Heart right ventricle (tissue), 16 donors: ENCODE measurements at regions of chr2 and their contacts with region 1.

Region 1: DNA sequence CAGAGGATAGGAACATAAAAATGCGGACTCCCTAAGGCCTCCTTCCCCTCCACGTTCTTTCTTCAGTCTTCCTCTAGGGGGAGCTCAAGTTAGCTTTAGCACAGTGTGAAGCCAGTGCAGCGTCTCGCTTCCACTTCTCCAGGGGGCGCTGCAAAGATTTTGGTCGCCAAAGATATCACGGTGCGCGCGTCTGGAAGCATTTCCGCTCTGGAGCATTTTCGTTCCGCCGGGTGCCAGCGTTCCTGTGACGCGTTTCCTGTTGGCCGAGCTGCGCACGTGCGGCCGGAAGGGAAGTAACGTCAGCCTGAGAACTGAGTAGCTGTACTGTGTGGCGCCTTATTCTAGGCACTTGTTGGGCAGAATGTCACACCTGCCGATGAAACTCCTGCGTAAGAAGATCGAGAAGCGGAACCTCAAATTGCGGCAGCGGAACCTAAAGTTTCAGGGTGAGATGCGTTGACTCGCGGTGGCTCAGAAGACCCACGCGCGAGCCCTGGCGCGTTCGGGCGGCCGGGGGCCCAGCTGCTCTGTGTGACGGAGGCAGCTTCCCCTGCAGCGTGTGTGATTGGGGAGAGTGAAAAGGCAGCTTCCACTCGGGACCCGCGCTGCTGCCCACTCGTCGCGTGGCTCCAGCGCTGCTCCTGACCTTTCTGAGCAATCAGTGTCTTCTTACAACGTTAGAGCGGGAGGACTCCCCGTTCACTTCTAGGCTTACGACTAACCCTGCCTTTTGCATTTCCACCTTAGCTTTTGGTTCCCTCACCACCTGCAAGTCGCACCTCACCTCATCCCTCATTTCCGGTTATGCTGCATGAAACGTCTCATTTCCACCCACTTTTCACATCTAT is at the start of gene DDX18:
- DNase-seq: peak; percentile 95 to 98
- ATAC-seq: peak; percentile 96 to 100 (median 98)
- H3K4me3 ChIP-seq: peak within 1 kb of the TSS; percentile 62 to 98 (median 87)
- H3K27ac ChIP-seq: peak within 1 kb of the TSS; percentile 63 to 95 (median 90)
- H3K4me1 ChIP-seq: peaks cover 5 to 33% (median 24%) of the 10 kb centered on the region in 9 donors
- H3K27me3 ChIP-seq: no peaks in the 10 kb centered on the region
- CTCF ChIP-seq: peak in 8 of 9 donors; percentile 93 to 100 (median 98)
- total RNA-seq, gene DDX18: 21.9 to 40.4 (median 29.3) TPM

Region 2: GRCh38 chr2:117536139-117536538 is 278.5 kb before region 1 on chr2:
- intact Hi-C with region 1: no loop called
- DNase-seq: no peak
- ATAC-seq: no peak
- H3K4me3 ChIP-seq: no peak overlapping the region
- H3K27ac ChIP-seq: no peak overlapping the region
- H3K4me1 ChIP-seq: no peaks in the 10 kb centered on the region
- H3K27me3 ChIP-seq: peaks cover 0 to 4% (median 0%) of the 10 kb centered on the region in 7 donors
- CTCF ChIP-seq: peak in 7 of 9 donors; percentile 21 to 53 (median 33)

Region 3: GRCh38 chr2:118003396-118003824 is 188.8 kb after region 1 on chr2:
- intact Hi-C with region 1: loop called in 2 of 10 experiments (anchors 5 kb)
- DNase-seq: peak in 1 of 2 donors; percentile 63
- ATAC-seq: peak; percentile 58 to 93 (median 88)
- H3K4me3 ChIP-seq: no peak overlapping the region
- H3K27ac ChIP-seq: no peak overlapping the region
- H3K4me1 ChIP-seq: peaks cover 0 to 48% (median 17%) of the 10 kb centered on the region in 9 donors
- H3K27me3 ChIP-seq: no peaks in the 10 kb centered on the region
- CTCF ChIP-seq: peak; percentile 71 to 88 (median 84)

Region 4: GRCh38 chr2:118013724-118014491 is 199.3 kb after region 1 on chr2 and contains the start of gene CCDC93:
- intact Hi-C with region 1: loop called in 1 of 10 experiments (anchors 5 kb)
- DNase-seq: peak; percentile 78 to 89
- ATAC-seq: peak; percentile 92 to 97 (median 96)
- H3K4me3 ChIP-seq: peak within 1 kb of the TSS; percentile 82 to 100 (median 97)
- H3K27ac ChIP-seq: peak within 1 kb of the TSS; percentile 83 to 99 (median 96)
- H3K4me1 ChIP-seq: peaks cover 0 to 69% (median 33%) of the 10 kb centered on the region in 9 donors
- H3K27me3 ChIP-seq: peaks cover 0 to 6% (median 0%) of the 10 kb centered on the region in 7 donors
- CTCF ChIP-seq: no peak
- total RNA-seq, gene CCDC93: 23.2 to 43.7 (median 30.4) TPM

Region 5: GRCh38 chr2:118088051-118089024 is 273.7 kb after region 1 on chr2 and contains the start of gene INSIG2:
- intact Hi-C with region 1: loop called in 2 of 10 experiments (anchors 10 kb)
- DNase-seq: peak; percentile 91 to 93
- ATAC-seq: peak; percentile 99 to 100 (median 99)
- H3K4me3 ChIP-seq: peak within 1 kb of the TSS; percentile 76 to 89 (median 82)
- H3K27ac ChIP-seq: peak within 1 kb of the TSS in 9 of 10 donors; percentile 1 to 87 (median 59)
- H3K4me1 ChIP-seq: peaks cover 0 to 29% (median 17%) of the 10 kb centered on the region in 9 donors
- H3K27me3 ChIP-seq: peaks cover 0 to 4% (median 0%) of the 10 kb centered on the region in 7 donors
- CTCF ChIP-seq: no peak
- total RNA-seq, gene INSIG2: 12.6 to 19.3 (median 13.8) TPM